Astrocyte of the cerebellum (primary cell): ENCODE measurements at regions of chr20 and their contacts with region 1.

Region 1: DNA sequence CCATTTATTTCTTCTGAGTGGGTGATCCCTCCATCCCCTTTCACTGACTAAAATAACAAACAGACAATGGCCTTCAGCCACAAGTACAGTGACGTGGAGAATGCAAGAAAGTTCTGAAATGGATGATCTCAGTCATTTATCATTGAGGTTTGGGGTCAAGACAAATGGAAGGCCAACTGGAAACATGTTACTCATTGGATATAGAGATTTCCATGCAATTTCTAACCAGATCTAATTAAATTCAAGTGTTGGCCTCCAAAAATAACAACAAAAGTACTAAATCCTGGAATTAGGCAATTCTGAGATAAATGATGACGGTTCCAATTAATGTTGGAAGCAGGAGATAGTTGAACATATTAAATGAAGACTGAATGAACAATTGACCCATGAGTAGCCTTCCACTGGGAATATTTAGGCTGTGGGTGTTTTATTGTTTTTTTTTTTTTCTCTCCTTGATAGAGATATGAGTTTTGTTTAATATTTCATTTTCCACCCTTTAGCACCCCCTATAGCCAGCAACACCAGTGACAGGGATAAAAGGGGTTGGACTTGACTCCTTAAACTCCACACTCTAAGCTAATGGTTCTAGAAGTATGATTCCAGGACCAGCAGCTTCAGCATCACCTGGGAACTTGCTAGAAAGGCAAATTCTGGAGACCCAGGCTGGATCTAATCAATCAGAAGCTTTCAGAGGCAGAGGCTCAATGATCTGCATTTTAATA is 112.8 kb downstream of the BCAS1 start:
- DNase-seq: peak; percentile 60
- H3K4me3 ChIP-seq: no peak overlapping the region
- CTCF ChIP-seq: peak; percentile 35

Region 2: GRCh38 chr20:53915446-53916172 is 42.0 kb before region 1 on chr20:
- in situ Hi-C with region 1: no loop called
- DNase-seq: peak; percentile 80
- H3K4me3 ChIP-seq: peak overlapping the region; percentile 48
- CTCF ChIP-seq: peak; percentile 75

Region 3: DNA sequence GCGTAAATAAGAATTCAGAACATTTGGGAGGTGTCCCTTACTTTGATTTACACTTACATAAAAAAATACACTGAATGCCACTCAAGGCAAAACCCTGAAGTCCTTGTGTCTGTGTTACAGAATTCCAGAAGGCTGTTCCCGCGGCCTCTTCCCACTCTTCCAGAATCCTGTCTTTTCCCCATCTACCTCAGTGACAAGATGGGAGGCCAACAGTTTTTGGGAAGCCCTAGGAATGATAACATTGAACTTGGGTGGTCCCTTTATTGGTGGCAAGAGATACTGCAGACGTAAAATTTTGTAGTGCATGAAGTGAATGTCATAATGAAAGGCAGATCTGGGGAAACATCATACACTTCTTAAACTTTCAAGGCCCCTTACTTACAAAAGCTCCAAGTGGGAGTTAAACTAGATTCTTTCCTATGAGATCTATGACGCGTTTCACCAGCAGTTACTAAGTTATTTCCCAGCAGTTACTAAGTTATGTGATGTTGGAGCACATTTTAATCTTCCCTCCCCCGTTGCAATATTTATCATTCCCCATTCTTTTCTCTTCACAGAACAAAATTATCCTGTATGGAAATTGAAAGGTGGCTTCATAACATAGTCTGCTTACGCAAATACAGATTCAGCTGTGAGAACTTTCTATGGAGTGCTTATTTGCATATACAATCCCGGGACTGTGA is 33.3 kb after region 1 on chr20:
- in situ Hi-C with region 1: loop called (anchors 5 kb)
- DNase-seq: no peak
- H3K4me3 ChIP-seq: no peak overlapping the region
- CTCF ChIP-seq: no peak